Heart right ventricle (tissue), 16 donors: ENCODE measurements at regions of chr15 and their contacts with region 1.

Region 1: DNA sequence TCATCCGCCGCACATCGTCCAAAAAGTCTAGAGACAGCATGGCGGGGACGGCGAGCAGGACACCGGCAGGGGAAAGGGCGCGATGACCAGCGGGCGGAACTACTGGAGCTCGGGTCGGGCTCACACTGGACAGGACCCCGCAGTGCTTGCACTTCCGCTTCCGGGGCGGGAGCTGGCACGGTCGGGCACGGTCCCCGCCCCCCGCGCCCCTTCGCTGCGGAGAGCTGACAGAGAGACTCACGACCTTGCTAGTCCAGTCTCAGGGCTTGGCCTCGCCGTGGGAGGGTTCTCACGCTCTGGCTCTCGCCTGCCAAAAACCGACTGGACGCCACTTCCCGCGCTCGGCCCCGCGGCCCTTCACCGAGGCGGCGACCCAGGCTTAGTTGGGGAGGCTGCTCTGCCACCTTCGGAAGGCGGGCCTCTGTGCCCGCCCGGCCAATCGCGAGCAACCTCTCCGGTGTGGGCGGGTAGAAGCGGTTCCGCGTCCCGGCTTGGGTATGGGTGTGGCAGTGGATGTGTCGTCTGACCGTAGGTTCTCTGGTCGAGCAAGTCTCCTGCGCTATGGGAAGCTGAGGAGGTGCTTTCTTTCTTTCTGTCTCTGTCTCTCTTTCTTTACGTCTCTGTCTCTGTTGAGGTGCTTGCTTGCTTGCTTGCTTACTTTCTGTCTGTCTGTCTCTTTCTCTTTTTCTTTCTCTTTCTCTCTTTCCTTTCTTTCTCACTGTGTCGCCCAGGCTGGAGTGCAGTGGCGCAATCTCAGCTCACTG is at the start of gene SEC11A:
- DNase-seq: peak; percentile 94 to 95
- ATAC-seq: peak; percentile 98 to 99 (median 98)
- H3K4me3 ChIP-seq: peak within 1 kb of the TSS; percentile 68 to 97 (median 88)
- H3K27ac ChIP-seq: peak within 1 kb of the TSS; percentile 89 to 98 (median 96)
- H3K4me1 ChIP-seq: peaks cover 5 to 53% (median 27%) of the 10 kb centered on the region in 9 donors
- H3K27me3 ChIP-seq: no peaks in the 10 kb centered on the region
- CTCF ChIP-seq: peak in 2 of 9 donors; percentile 6 to 8
- total RNA-seq, gene SEC11A: 65.9 to 93.8 (median 75.0) TPM

Region 2: GRCh38 chr15:84761607-84762131 is 45.5 kb after region 1 on chr15:
- intact Hi-C with region 1: loop called in 1 of 10 experiments (anchors 10 kb)
- DNase-seq: no peak
- ATAC-seq: no peak
- H3K4me3 ChIP-seq: no peak overlapping the region
- H3K27ac ChIP-seq: peak overlapping the region in 2 of 10 donors; percentile 37 to 50
- H3K4me1 ChIP-seq: peaks cover 21 to 81% (median 61%) of the 10 kb centered on the region in 9 donors
- H3K27me3 ChIP-seq: no peaks in the 10 kb centered on the region
- CTCF ChIP-seq: no peak

Region 3: DNA sequence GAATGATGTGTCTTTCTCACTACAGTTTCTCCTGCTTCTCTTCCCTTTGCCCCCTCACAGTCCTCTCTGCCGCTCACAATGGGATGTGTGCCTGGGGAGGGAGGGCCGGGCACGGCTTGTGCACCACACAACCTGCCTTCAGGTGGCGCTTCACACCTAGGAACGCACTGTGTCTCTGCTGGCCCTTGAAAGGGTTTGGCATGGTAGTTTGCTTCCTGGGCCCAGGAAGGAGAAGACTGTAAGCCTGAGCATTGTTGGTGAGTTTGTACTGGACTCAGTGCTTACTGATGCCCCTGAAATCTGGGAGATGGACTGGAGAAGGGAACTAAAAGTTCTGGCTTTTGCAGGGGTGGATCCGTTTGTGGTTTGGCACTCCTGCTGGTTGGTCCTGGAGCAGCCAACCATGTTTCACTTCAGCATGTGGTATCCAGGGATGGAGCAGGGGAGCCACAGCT is 110.2 kb after region 1 on chr15:
- intact Hi-C with region 1: loop called in 1 of 10 experiments (anchors 5 kb)
- DNase-seq: no peak
- ATAC-seq: peak in 5 of 8 donors; percentile 7 to 44 (median 33)
- H3K4me3 ChIP-seq: no peak overlapping the region
- H3K27ac ChIP-seq: peak overlapping the region in 9 of 10 donors; percentile 35 to 99 (median 95)
- H3K4me1 ChIP-seq: peaks cover 24 to 100% (median 96%) of the 10 kb centered on the region in 9 donors
- H3K27me3 ChIP-seq: no peaks in the 10 kb centered on the region
- CTCF ChIP-seq: peak in 7 of 9 donors; percentile 16 to 53 (median 40)